PC-3 (cell line): ENCODE measurements at regions of chr10 and their contacts with region 1.

Region 1: GRCh38 chr10:33273295-33274002 is 61.0 kb downstream of the NRP1 start:
- DNase-seq: peak; percentile 100
- ATAC-seq: peak; percentile 87
- H3K4me3 ChIP-seq: peak overlapping the region; percentile 47
- H3K27ac ChIP-seq: peak overlapping the region; percentile 71
- H3K4me1 ChIP-seq: peaks cover 66% of the 10 kb centered on the region
- H3K27me3 ChIP-seq: no peaks in the 10 kb centered on the region
- CTCF ChIP-seq: no peak

Region 2: DNA sequence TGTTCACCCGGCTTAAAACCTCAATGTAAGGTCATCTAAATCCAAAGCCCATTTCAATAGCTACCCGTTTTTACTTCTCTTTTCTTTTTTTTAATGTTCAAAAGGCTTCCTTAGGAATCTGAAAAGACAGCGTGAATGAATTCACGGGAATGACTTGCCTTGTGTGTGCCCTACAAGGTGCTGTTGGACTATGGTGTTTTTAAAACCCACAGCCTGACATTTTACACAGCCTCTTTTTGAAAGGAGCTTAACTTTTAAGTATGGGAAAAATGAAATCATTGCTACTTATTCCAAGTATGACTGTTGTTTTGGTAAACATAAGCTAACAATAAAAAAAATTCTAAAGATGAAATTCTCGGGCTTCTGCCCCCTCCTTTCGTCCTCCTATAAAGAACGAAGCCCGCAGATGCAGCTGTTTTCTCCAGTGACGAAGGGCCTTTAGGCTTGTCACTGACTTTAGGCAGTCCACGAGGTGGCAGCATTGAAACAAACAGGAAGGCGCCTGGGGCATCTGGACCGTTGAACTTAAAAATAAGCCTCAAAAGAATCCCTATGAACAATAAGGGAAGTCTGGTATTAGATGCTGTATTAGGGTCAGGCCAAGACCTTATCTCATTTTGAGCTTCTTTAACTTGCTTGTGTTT is 80.3 kb before region 1 on chr10:
- CTCF ChIA-PET with region 1: interaction called, 71 read pairs
- POLR2A ChIA-PET with region 1: interaction called, 32 read pairs
- intact Hi-C with region 1: loop called (anchors 1 kb)
- DNase-seq: peak; percentile 100
- ATAC-seq: peak; percentile 74
- H3K4me3 ChIP-seq: no peak overlapping the region
- H3K27ac ChIP-seq: peak overlapping the region; percentile 72
- H3K4me1 ChIP-seq: peaks cover 54% of the 10 kb centered on the region
- H3K27me3 ChIP-seq: no peaks in the 10 kb centered on the region
- CTCF ChIP-seq: no peak

Region 3: GRCh38 chr10:33237736-33238624 is 35.5 kb before region 1 on chr10:
- CTCF ChIA-PET with region 1: interaction called, 6 read pairs
- POLR2A ChIA-PET with region 1: interaction called, 6 read pairs
- intact Hi-C with region 1: loop called (anchors 1 kb)
- DNase-seq: peak; percentile 100
- ATAC-seq: peak; percentile 94
- H3K4me3 ChIP-seq: peak overlapping the region; percentile 2; the same call in 1 of the 2 replicates
- H3K27ac ChIP-seq: peak overlapping the region; percentile 66
- H3K4me1 ChIP-seq: peaks cover 61% of the 10 kb centered on the region
- H3K27me3 ChIP-seq: no peaks in the 10 kb centered on the region
- CTCF ChIP-seq: no peak

Region 4: GRCh38 chr10:33258967-33259366 is 14.5 kb before region 1 on chr10:
- CTCF ChIA-PET with region 1: interaction called, 6 read pairs
- POLR2A ChIA-PET with region 1: interaction called, 23 read pairs
- intact Hi-C with region 1: loop called (anchors 1 kb)
- DNase-seq: peak; percentile 98
- ATAC-seq: peak; percentile 52
- H3K4me3 ChIP-seq: no peak overlapping the region
- H3K27ac ChIP-seq: peak overlapping the region; percentile 65
- H3K4me1 ChIP-seq: peaks cover 86% of the 10 kb centered on the region
- H3K27me3 ChIP-seq: no peaks in the 10 kb centered on the region
- CTCF ChIP-seq: no peak

Region 5: GRCh38 chr10:33314811-33315561 is 41.5 kb after region 1 on chr10:
- CTCF ChIA-PET with region 1: interaction called, 13 read pairs
- POLR2A ChIA-PET with region 1: interaction called, 3 read pairs
- intact Hi-C with region 1: no loop called
- DNase-seq: peak; percentile 92
- ATAC-seq: peak; percentile 60
- H3K4me3 ChIP-seq: no peak overlapping the region
- H3K27ac ChIP-seq: peak overlapping the region; percentile 55
- H3K4me1 ChIP-seq: peaks cover 35% of the 10 kb centered on the region
- H3K27me3 ChIP-seq: no peaks in the 10 kb centered on the region
- CTCF ChIP-seq: no peak